OCI-LY7 (cell line): ENCODE measurements at regions of chr7 and their contacts with region 1.

Region 1: GRCh38 chr7:92809397-92810241 is 26.8 kb downstream of the CDK6 start:
- DNase-seq: peak; percentile 80
- H3K4me3 ChIP-seq: peak overlapping the region; percentile 19
- H3K27ac ChIP-seq: peak overlapping the region; percentile 74
- H3K4me1 ChIP-seq: peaks cover 66% of the 10 kb centered on the region
- CTCF ChIP-seq: no peak

Region 2: GRCh38 chr7:92708111-92709042 is 101.2 kb before region 1 on chr7:
- CTCF ChIA-PET with region 1: no interaction called
- POLR2A ChIA-PET with region 1: no interaction called
- intact Hi-C with region 1: no loop called
- DNase-seq: no peak
- H3K4me3 ChIP-seq: no peak overlapping the region
- H3K27ac ChIP-seq: no peak overlapping the region
- H3K4me1 ChIP-seq: no peaks in the 10 kb centered on the region
- CTCF ChIP-seq: no peak

Region 3: GRCh38 chr7:93298671-93299070 is 489.1 kb after region 1 on chr7:
- CTCF ChIA-PET with region 1: no interaction called
- POLR2A ChIA-PET with region 1: no interaction called
- intact Hi-C with region 1: no loop called
- DNase-seq: no peak
- H3K4me3 ChIP-seq: no peak overlapping the region
- H3K27ac ChIP-seq: no peak overlapping the region
- H3K4me1 ChIP-seq: no peaks in the 10 kb centered on the region
- CTCF ChIP-seq: no peak

Region 4: DNA sequence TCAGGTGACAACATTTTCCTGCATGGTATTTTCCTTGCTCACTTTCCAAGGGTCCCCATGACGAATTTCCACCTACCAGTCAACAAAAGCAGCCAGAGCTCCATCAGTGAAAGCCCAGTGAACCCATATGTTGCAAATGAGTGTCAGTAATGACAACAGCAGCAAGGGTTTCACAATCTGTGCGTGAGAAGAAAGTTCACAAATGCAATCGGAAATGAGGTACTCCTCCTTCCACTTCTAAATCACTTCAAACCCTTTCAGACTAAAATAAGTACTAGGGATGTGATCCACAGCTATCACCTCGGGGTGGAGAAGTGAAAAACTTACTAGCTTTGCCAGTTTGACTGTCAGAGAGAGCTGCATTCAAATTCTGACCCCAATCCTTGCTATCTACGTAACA is 1250.1 kb after region 1 on chr7:
- CTCF ChIA-PET with region 1: no interaction called
- POLR2A ChIA-PET with region 1: no interaction called
- intact Hi-C with region 1: loop called (anchors 10 kb)
- DNase-seq: peak; percentile 22
- H3K4me3 ChIP-seq: no peak overlapping the region
- H3K27ac ChIP-seq: peak overlapping the region; percentile 6
- H3K4me1 ChIP-seq: peaks cover 61% of the 10 kb centered on the region
- CTCF ChIP-seq: no peak